ENCODE measurements at regions of chrX and their contacts with region 1.

Region 1: DNA sequence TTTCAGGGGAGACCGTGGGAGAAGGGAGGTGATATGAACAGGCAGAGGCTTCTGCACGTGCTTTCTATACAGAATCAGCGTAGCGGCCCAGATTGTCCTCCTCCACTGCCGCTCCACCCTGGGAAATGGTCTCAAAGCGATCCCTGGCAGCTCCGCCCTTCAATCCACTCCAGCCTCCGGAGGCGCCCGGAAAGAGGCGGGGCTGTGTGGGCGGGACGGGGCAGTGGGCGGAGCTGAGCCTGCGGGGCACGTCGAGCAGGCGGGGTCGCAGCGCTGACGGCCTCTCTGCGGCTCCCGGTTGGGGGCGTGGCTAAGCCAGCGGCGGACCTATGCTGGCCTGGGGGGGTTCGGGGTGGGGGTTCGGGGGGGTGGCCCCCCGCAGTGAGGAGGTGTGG is 210 bp upstream of the SMIM10L2A start:
- DNase-seq: peak; percentile 69 to 93 (median 85)
- H3K4me3 ChIP-seq: peak overlapping the region; percentile 31 to 76 (median 58)
- H3K27ac ChIP-seq: peak overlapping the region in 27 of 59 donors; percentile 12 to 75 (median 50)
- H3K27me3 ChIP-seq: peaks cover 0 to 58% (median 0%) of the 10 kb centered on the region in 45 donors
- CTCF ChIP-seq: peak in 1 of 56 donors; percentile 8

Region 2: GRCh38 chrX:135521405-135522189 is 100.1 kb after region 1 on chrX:
- intact Hi-C with region 1: loop called in 1 of 2 experiments (anchors 5 kb)
- DNase-seq: peak; percentile 44 to 86 (median 75)
- H3K4me3 ChIP-seq: peak overlapping the region; percentile 38 to 76 (median 64)
- H3K27ac ChIP-seq: peak overlapping the region; percentile 18 to 94 (median 83)
- H3K27me3 ChIP-seq: peaks cover 0 to 31% (median 0%) of the 10 kb centered on the region in 45 donors
- CTCF ChIP-seq: peak in 2 of 56 donors; percentile 8 to 29

Measured in dorsolateral prefrontal cortex (tissue), 120 donors.